Naive thymus-derived CD4-positive, alpha-beta T cell (primary cell): ENCODE measurements at regions of chr2 and their contacts with region 1.

Region 1: DNA sequence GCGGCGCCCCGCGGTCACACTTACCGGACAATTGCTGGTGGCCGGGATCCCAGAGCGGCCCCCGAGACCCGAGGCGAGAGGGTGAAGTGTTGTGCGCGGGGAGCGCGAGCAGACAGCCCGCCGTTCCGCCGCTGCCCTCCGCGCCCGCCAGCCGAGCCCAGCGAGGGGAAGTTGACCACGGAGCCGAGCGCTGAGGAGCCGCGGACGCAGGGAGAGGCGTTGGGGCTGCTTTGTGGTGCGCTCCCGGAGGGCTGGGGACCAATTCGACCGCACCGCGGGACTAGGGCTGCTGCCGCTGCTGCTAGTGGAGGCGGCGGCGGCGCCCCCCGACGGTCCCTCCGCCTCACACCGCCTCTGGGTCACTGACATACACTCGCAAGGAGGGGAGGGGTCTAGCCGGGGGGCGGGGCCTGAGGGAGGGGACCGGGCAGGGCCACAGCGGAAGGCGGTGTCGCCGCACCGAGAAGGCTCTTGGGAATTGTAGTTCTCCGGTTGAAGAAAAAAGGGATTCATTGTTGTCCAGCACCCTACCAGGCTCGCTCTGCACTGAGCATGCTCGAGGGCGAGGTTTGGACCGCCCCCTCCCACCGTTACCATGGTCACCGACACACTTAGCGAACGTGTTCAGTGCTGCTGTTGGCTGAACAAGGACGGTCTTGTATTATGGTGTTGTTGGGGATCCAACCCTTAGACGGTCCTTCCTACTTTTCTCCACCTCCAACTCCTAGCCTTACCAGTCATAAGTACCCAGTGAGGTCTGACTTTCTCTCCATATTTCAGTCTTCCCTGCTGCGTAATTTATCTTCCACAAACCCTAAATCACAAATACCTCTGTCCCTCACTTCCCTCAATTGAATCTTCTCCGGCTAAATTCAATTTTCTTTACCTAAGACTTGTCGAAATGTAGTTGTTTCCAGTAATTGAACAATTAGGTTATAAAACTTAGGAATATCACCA is at the start of gene PELI1:
- DNase-seq: peak; percentile 82 to 95 (median 88)
- ATAC-seq: peak; percentile 97
- H3K4me3 ChIP-seq: peak within 1 kb of the TSS; percentile 88
- H3K4me3 Mint-ChIP-seq: peak within 1 kb of the TSS in 9 of 10 donors; percentile 87 to 98 (median 93)
- H3K27ac ChIP-seq: peak within 1 kb of the TSS; percentile 98
- H3K27ac Mint-ChIP-seq: peak within 1 kb of the TSS; percentile 93 to 99 (median 96)
- H3K4me1 ChIP-seq: peaks cover 11 to 24% of the 10 kb centered on the region in 2 donors
- H3K4me1 Mint-ChIP-seq: peaks cover 19 to 33% (median 31%) of the 10 kb centered on the region in 7 donors
- H3K27me3 ChIP-seq: no peaks in the 10 kb centered on the region
- H3K27me3 Mint-ChIP-seq: no peaks in the 10 kb centered on the region
- total RNA-seq, gene PELI1: 33.4 to 170 (median 57.2) TPM

Region 2: DNA sequence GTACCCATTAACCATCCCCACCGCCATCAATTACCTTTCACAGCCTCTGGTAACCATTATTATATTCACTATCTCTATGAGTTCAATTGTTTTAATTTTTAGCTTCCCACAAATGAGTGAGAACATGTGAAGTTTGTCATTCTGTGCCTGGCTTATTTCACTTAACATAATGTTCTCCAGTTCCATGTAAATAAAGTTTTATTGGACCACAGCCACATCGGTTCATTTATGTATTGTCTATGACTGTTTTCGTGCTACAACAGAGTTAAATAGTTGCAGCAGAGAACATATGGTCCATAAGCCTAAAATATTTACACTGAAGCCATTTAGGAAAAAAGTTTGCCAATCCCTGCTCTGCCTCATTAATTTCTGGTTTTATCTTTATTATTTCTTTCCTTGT is 977.4 kb before region 1 on chr2:
- CTCF ChIA-PET with region 1: no interaction called
- POLR2A ChIA-PET with region 1: no interaction called
- intact Hi-C with region 1: no loop called
- DNase-seq: no peak
- ATAC-seq: no peak
- H3K4me3 ChIP-seq: no peak overlapping the region
- H3K4me3 Mint-ChIP-seq: no peak overlapping the region
- H3K27ac ChIP-seq: no peak overlapping the region
- H3K27ac Mint-ChIP-seq: no peak overlapping the region
- H3K4me1 ChIP-seq: no peaks in the 10 kb centered on the region
- H3K4me1 Mint-ChIP-seq: no peaks in the 10 kb centered on the region
- H3K27me3 ChIP-seq: no peaks in the 10 kb centered on the region
- H3K27me3 Mint-ChIP-seq: no peaks in the 10 kb centered on the region

Region 3: DNA sequence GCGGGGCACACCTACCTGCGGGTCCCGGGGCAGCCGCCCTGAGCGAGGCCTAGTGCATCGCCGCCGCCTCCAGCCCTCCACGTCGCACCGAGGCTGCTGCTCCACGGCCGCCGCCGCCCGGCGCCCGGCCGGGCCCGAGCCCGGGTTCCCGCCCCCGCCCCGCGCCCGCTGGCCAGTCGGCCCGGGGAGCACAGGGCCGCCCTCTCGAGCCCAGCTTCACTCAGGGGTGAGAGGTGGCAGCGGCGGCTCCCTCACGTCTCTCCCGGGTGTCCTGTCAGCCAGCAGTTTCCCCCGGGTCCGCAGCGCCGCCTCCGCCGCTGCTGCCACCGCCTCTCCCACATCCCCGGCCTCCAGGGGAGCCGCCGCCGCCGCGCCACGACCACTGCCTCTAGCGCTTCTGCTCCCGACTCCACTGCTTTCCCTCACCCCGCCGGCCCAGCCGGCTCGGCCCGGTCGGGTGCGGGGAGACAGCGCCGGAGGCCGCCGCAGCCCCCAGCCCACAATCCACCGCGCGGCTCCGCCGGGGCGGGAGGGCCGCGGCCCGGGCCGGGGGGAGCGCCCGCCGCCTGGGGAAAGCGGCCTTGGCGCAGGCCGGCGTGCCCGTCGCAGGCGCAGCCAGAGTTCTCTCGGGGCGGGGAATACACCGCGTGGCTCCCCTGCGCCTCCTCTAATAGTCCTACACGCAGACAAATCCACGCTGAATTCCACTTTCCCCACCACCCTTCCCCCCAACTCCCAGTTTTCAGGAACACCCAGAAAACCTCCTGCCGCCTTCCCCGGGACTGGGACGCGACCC is 125.2 kb before region 1 on chr2 and contains the start of gene VPS54:
- CTCF ChIA-PET with region 1: no interaction called
- POLR2A ChIA-PET with region 1: no interaction called
- intact Hi-C with region 1: loop called in 1 of 2 experiments (anchors 2 kb)
- DNase-seq: peak; percentile 42 to 76 (median 65)
- ATAC-seq: peak; percentile 87
- H3K4me3 ChIP-seq: peak within 1 kb of the TSS; percentile 86
- H3K4me3 Mint-ChIP-seq: peak within 1 kb of the TSS; percentile 94 to 100 (median 98)
- H3K27ac ChIP-seq: peak within 1 kb of the TSS; percentile 79
- H3K27ac Mint-ChIP-seq: peak within 1 kb of the TSS; percentile 95 to 100 (median 97)
- H3K4me1 ChIP-seq: peaks cover 22 to 31% of the 10 kb centered on the region in 2 donors
- H3K4me1 Mint-ChIP-seq: peaks cover 20 to 60% (median 48%) of the 10 kb centered on the region in 7 donors
- H3K27me3 ChIP-seq: no peaks in the 10 kb centered on the region
- H3K27me3 Mint-ChIP-seq: no peaks in the 10 kb centered on the region
- total RNA-seq, gene VPS54: 13.2 to 20.8 (median 15.6) TPM

Region 4: DNA sequence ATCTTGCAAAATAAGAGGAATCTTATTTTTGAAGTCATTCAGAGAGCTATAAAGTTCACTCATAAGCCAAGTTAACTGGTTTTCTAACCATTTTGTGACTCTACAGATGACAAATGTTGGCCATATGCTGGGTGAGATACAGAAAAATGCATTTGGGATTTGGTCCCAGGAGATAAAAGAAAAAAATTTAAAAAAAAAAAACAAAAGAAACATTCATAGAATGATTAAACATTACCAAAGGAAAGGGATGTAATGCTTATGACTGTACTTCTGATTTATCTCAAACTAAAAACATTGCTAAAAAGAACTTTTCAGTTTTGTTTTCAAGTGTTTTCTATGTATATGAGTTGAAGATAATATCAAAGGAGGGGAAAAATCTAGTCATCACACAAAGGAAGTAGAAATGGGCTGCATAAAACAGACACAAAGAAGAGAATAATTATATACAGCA is 43.2 kb before region 1 on chr2:
- CTCF ChIA-PET with region 1: interaction called, 4 read pairs
- POLR2A ChIA-PET with region 1: interaction called, 14 read pairs
- intact Hi-C with region 1: loop called (anchors 1 kb)
- DNase-seq: peak in 6 of 9 donors; percentile 10 to 57 (median 44)
- ATAC-seq: peak; percentile 56
- H3K4me3 ChIP-seq: no peak overlapping the region
- H3K4me3 Mint-ChIP-seq: peak overlapping the region in 9 of 10 donors; percentile 18 to 83 (median 55)
- H3K27ac ChIP-seq: peak overlapping the region; percentile 33
- H3K27ac Mint-ChIP-seq: peak overlapping the region; percentile 44 to 88 (median 80)
- H3K4me1 ChIP-seq: peaks cover 0 to 16% of the 10 kb centered on the region in 2 donors
- H3K4me1 Mint-ChIP-seq: peaks cover 14 to 66% (median 60%) of the 10 kb centered on the region in 7 donors
- H3K27me3 ChIP-seq: no peaks in the 10 kb centered on the region
- H3K27me3 Mint-ChIP-seq: no peaks in the 10 kb centered on the region

Region 5: GRCh38 chr2:64194016-64194415 is 49.7 kb after region 1 on chr2:
- CTCF ChIA-PET with region 1: no interaction called
- POLR2A ChIA-PET with region 1: no interaction called
- intact Hi-C with region 1: no loop called
- DNase-seq: no peak
- ATAC-seq: no peak
- H3K4me3 ChIP-seq: no peak overlapping the region
- H3K4me3 Mint-ChIP-seq: no peak overlapping the region
- H3K27ac ChIP-seq: no peak overlapping the region
- H3K27ac Mint-ChIP-seq: no peak overlapping the region
- H3K4me1 ChIP-seq: peaks cover 0 to under 1% of the 10 kb centered on the region in 2 donors
- H3K4me1 Mint-ChIP-seq: peaks cover 12 to 38% (median 32%) of the 10 kb centered on the region in 7 donors
- H3K27me3 ChIP-seq: no peaks in the 10 kb centered on the region
- H3K27me3 Mint-ChIP-seq: peaks cover 0 to 13% (median 0%) of the 10 kb centered on the region in 5 donors

Region 6: DNA sequence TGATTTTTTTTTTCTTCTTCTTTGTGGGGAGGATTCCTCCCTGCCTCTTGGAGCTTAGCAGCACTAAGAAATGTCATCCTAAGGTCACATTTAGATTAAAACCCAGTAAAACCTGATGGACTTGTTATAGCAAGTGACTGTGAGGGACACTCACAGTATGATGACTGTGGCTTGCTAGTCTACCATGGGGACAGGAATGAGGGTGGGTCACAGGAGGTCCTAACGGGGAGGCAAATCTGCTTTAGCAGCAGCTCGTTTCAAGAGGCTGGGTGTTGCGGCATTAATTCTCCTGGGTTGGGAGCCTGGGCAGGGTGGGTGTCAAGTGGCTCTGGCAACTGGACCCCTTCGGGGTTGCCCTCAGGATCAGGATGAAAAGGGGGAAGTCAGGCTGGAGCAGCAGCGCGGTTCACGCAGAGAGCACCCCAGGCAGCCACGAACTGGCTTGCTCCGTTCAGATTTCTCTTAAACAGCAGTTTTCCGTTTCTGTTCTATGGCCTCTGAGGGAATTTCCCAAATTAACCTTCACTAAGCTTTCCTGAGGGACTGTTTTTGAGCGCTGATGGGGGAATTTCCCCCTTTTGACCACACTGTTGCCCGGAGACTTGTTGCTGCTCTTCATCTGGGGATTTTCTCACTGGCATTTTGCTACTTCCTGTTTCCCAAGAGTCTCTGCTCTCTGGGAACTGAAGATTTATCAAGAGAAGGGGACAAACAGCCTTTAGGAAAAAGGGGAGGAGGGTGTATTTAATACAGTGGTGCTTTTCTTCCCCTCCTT is 59.7 kb after region 1 on chr2:
- CTCF ChIA-PET with region 1: no interaction called
- POLR2A ChIA-PET with region 1: interaction called, 5 read pairs
- intact Hi-C with region 1: loop called (anchors 1 to 2 kb)
- DNase-seq: peak in 5 of 9 donors; percentile 12 to 67 (median 28)
- ATAC-seq: peak; percentile 81
- H3K4me3 ChIP-seq: peak overlapping the region; percentile 52
- H3K4me3 Mint-ChIP-seq: peak overlapping the region; percentile 72 to 89 (median 80)
- H3K27ac ChIP-seq: peak overlapping the region; percentile 66
- H3K27ac Mint-ChIP-seq: peak overlapping the region; percentile 82 to 95 (median 94)
- H3K4me1 ChIP-seq: peaks cover 0 to 51% of the 10 kb centered on the region in 2 donors
- H3K4me1 Mint-ChIP-seq: peaks cover 26 to 91% (median 81%) of the 10 kb centered on the region in 7 donors
- H3K27me3 ChIP-seq: no peaks in the 10 kb centered on the region
- H3K27me3 Mint-ChIP-seq: no peaks in the 10 kb centered on the region

Region 7: DNA sequence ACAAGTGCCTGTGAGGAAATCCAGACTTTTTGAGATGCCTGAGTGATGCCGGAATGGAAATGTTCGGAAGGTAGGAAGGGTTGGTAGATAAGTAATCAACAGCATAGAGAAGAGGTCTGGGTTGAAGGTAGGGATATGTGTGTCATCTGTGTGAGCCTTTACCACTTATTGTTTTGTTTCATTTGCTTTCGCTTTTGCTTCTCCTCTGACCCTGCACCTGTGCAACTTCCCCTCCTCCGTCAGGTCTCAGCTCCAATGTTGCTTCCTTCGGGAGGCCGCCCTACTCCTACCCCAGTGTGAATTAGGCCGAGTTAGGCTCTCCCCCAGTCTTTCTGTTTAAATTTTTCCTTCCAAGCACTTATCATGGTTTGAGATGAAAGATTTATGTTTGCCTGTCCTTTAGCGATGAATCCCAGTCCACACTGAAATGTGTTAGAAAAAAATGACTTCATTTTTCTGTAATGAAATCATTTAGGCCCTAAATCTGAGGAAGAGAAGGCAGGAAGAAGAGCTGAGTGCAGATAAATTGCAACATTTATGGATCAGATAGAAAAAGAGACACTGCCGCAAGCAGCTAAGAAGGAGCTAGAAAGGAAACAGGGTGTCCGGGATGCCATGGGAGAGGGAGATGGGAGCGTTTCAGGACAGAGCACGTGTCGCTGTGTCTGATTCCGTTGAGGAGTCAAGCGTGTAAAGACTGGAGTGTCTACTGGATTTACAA is 139.5 kb after region 1 on chr2:
- CTCF ChIA-PET with region 1: no interaction called
- POLR2A ChIA-PET with region 1: interaction called, 4 read pairs
- intact Hi-C with region 1: loop called in 1 of 2 experiments (anchors 1 kb)
- DNase-seq: peak in 7 of 9 donors; percentile 14 to 54 (median 41)
- ATAC-seq: peak; percentile 82
- H3K4me3 ChIP-seq: peak overlapping the region; percentile 41
- H3K4me3 Mint-ChIP-seq: no peak overlapping the region
- H3K27ac ChIP-seq: peak overlapping the region; percentile 59
- H3K27ac Mint-ChIP-seq: no peak overlapping the region
- H3K4me1 ChIP-seq: peaks cover 8 to 12% of the 10 kb centered on the region in 2 donors
- H3K4me1 Mint-ChIP-seq: no peaks in the 10 kb centered on the region
- H3K27me3 ChIP-seq: no peaks in the 10 kb centered on the region
- H3K27me3 Mint-ChIP-seq: no peaks in the 10 kb centered on the region

Region 8: GRCh38 chr2:65129826-65130663 is 985.7 kb after region 1 on chr2 and contains the start of gene RAB1A:
- CTCF ChIA-PET with region 1: no interaction called
- POLR2A ChIA-PET with region 1: no interaction called
- intact Hi-C with region 1: loop called in 1 of 2 experiments (anchors 1 kb)
- DNase-seq: peak; percentile 91 to 99 (median 98)
- ATAC-seq: peak; percentile 94
- H3K4me3 ChIP-seq: peak within 1 kb of the TSS; percentile 78
- H3K4me3 Mint-ChIP-seq: peak within 1 kb of the TSS; percentile 90 to 100 (median 98)
- H3K27ac ChIP-seq: peak within 1 kb of the TSS; percentile 98
- H3K27ac Mint-ChIP-seq: peak within 1 kb of the TSS; percentile 95 to 100 (median 99)
- H3K4me1 ChIP-seq: peaks cover 24 to 25% of the 10 kb centered on the region in 2 donors
- H3K4me1 Mint-ChIP-seq: peaks cover 24 to 47% (median 35%) of the 10 kb centered on the region in 7 donors
- H3K27me3 ChIP-seq: no peaks in the 10 kb centered on the region
- H3K27me3 Mint-ChIP-seq: peaks cover 0 to 17% (median 0%) of the 10 kb centered on the region in 5 donors
- total RNA-seq, gene RAB1A: 48.8 to 78.6 (median 65.8) TPM